RWPE1 (cell line): ENCODE measurements at regions of chr21 and their contacts with region 1.

Region 1: DNA sequence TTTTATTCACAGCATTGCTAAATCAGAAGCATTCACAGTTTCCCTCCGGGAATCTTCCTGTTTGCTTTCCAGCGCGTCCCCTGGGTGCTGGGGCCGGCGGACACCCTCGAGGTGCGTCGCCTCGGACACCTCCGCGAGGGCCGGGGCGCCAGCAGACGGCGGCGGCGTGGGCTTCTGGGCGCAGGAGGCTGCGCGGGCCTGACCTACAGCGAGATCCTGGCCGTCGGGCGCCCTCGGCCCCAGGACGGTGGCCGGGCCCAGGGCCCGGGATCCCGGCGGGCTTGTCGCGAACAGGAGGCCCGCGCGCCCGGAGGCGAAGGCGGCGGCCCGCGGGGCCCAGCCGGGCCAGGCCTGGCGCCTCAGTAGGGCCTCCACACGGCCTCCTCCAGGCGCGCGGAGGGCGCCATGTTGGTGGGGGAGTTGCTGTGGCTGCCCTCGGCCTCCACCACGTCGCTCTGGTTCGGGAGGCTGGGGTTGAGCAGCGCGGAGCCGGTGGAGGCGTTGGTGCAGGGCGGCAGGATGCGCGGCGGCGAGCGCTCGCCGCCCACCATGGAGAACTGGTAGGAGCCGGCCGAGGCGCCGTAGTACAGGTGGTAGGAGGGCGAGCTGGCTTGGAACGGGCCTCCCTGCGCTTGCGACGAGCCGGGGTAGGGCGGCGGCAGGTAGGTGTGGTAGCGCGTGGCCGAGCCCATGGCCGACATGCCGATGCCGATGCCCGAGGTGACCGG is 123.1 kb downstream of the CLIC6 start:
- DNase-seq: no peak
- H3K27ac ChIP-seq: no peak overlapping the region
- CTCF ChIP-seq: no peak

Region 2: DNA sequence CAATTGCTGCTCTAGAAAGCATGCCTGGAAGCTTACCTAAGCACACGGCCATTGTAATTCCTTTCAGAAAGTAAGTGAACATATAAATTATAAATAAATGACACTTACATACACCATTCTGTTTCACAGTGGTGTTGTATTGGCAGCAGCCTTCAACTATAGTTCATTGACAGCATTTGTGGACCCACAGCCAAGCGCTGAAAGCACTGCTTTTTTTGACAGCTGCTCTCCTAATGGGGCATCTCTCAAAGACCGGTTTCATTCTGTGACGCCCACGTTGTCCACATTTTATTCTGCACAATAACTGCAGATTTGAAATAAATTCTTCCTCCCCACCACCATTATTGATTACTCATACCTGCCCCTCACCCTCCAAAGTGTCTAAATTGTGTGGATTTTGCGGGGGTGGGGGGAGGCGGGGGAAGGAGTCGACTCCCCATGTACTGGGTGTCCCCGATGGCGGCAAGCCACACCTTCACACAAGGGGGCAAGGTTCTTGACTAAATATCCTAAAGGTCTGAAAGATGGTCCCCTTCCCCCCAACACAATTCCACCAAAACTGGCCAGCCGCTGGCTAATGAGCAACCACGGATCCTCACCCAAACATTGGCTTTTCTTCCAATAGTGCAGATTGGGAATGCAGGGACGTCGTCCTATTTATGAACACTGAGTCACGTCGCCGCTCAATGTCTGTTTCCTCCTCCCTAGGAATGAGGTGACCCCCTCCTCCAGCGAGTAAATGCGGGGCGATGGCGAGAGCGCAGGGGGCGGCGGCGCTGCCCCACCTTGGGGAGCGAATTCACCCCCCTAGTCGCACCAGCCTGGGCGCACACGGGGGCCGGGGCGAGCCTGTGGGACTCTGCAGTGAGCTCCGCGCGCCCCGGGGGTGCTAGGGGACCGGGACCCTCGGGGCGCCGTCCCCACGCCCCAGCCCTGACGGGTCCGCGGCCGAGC is 178.0 kb before region 1 on chr21:
- CTCF ChIA-PET with region 1: no interaction called
- POLR2A ChIA-PET with region 1: no interaction called
- DNase-seq: peak; percentile 30
- H3K27ac ChIP-seq: peak overlapping the region; percentile 72
- CTCF ChIP-seq: no peak

Region 3: GRCh38 chr21:34745557-34746255 is 46.2 kb before region 1 on chr21:
- CTCF ChIA-PET with region 1: interaction called, 10 read pairs
- POLR2A ChIA-PET with region 1: no interaction called
- DNase-seq: peak; percentile 68
- H3K27ac ChIP-seq: peak overlapping the region; percentile 51
- CTCF ChIP-seq: peak; percentile 86

Region 4: DNA sequence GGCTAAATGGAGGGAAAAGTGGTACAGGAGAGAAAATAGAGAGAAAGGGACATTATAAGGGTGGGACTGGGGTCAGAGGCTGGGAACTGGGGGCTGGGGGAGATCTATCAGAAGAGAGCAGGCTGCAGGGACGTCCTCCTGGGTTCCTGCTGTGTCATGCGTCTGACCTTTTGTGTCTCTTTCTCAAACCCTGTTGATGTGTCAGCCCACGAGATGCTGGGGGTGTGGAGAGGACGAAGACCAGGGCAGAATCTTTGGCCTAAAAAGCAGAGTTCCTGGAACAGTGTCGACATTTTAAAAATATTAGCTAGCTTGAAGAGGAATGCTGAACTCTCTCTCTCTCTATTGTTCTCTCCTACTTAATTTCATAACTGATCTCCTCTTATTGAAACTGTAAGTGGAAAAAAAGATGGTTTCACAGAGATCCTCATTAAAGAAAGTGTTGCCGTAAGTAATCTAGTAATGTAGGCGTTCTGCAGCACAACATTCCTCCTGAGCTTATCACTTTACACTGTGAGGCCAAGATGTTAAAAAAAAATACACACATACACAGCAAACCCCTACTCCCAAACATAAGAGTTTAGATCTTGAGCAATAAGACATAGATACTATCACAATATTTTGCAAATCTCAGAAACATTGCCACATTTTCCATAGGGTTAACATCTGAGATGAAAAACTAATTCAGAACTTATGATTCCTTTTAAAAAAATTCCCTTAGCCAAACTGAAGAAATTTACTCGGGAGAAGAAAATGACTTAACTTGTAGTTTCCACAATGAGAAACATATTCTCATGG is 204.6 kb after region 1 on chr21:
- CTCF ChIA-PET with region 1: no interaction called
- POLR2A ChIA-PET with region 1: no interaction called
- DNase-seq: no peak
- H3K27ac ChIP-seq: no peak overlapping the region
- CTCF ChIP-seq: no peak